Activated CD8-positive, alpha-beta memory T cell treated with anti-CD3 and anti-CD28 coated beads, Interleukin-2, amount 10 ng/mL, durations not matched to agents 7 days and 5 days (primary cell): ENCODE measurements at regions of chr11 and their contacts with region 1.

Region 1: DNA sequence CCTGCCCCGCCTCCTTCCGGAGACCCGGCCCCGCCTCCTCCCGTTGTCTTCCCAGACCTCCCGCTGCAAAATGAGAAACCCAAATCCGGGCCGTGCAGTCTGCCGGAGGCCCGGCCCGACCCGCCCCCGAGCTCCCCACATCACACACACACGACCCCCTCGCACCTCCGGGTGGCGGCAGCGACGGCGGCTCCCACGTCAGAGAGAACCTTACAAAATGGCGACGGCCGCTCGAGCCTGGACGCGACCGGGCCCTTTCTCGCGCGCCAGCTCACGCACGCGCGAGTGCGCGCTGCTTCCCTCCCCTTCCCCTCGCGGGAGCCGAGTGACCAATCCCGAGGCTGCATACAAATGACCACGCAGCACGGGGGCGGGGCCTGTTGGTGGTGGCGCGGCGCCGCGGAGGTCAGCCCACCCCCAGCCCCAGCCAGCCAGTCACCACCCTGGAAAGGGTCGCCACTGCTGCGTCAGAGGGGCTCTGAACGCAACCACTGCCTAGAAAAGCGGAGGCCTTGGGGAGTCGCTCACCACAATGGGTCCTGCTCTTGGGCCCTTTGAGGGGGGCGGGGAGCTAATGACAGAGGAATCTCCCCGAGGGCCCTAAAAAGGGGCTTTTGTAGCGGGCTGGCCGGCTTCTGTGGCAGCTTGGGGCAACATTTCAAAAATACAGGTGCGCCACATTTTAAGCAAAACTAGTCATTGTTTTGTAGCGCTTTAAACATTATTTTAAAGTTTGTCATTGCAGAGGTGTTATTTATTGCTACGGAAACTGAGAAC is at the start of gene RBM4B:
- DNase-seq: peak; percentile 97
- ATAC-seq: peak; percentile 91
- H3K4me3 Mint-ChIP-seq: peak within 1 kb of the TSS; percentile 88
- H3K27ac Mint-ChIP-seq: peak within 1 kb of the TSS; percentile 94
- H3K4me1 Mint-ChIP-seq: peaks cover 36% of the 10 kb centered on the region
- H3K27me3 Mint-ChIP-seq: no peaks in the 10 kb centered on the region
- total RNA-seq, gene RBM4B: 14.7 to 20.9 TPM

Region 2: DNA sequence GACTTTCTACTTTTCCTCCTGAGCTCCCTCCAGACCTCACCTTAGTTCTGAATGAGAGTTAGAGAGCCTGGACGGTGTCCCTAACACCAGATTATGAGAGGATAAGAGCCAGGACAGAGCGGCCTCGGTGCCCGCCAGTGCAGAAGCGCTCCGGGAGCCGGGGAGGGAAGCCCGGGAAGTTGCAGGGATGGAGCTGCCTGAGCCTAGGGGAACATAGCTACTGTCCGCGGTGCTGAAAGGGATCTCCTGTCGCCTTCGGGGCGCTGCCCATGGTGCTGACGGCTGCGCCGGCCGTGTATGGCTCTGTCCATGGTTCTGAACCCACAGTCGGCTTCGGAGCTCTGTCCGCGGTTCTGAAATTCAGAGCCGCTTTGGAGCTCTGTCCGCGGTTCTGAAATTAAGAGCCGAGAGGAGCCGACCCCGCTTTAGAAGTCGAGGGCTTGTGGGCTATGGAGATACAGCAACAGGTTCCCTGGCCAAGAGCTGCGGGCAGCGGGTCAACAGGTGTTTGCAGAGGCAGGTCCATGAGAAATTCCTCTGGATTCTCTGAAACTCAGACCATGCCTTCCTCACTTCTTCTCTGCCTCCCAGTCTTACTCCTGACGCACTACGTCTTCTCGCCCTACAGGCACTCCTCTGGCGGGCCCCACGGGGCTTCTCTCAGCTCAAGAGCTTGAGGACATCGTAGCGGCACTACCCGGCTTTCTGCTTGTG is 256.1 kb before region 1 on chr11:
- CTCF ChIA-PET with region 1: interaction called, 10 read pairs
- DNase-seq: peak; percentile 91
- ATAC-seq: peak; percentile 79
- H3K4me3 Mint-ChIP-seq: no peak overlapping the region
- H3K27ac Mint-ChIP-seq: no peak overlapping the region
- H3K4me1 Mint-ChIP-seq: peaks cover 14% of the 10 kb centered on the region
- H3K27me3 Mint-ChIP-seq: peaks cover 35% of the 10 kb centered on the region

Region 3: DNA sequence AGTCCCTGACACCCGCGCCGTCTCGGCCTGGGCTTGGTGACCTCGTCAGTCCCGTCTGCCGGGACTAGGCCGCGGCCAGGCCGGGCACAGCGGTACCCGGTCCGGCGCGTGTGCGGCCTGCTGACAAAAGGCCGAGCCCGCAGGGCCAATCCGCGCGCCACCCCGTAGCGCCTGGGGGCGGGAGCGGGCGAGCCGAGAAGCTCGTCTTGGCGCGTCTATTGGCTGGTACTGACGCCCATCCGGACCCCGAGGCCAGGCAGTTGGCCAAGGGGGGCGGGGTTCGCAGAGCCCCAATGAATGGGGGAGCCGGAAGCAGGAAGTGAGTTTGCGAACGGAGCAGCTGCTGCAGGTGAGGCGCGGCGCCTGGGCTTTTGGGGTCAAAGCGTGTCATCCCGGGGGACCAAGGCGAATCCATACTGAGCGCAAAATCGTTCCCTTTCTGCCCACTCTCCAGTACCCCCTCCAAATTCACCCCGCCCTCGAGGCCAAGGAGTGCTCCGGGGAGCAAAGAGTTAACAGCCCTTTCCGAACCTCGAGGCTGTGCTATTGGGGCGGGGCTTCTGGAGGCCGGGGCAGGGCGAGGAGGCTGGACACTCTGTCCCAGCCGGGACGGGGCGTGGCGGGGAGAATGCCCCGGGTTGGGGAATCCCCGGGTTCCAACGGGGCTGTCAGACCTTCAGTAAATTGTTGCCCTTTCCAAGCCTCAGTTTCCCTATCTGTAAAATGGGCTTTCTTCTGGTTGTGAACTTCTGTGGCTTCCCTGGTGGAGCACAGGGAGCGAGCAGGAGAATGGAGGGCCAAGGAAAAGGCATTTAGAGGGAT is 197.5 kb before region 1 on chr11 and contains the start of gene DPP3:
- CTCF ChIA-PET with region 1: interaction called, 13 read pairs
- DNase-seq: peak; percentile 98
- ATAC-seq: peak; percentile 98
- H3K4me3 Mint-ChIP-seq: peak within 1 kb of the TSS; percentile 91
- H3K27ac Mint-ChIP-seq: peak within 1 kb of the TSS; percentile 93
- H3K4me1 Mint-ChIP-seq: peaks cover 33% of the 10 kb centered on the region
- H3K27me3 Mint-ChIP-seq: no peaks in the 10 kb centered on the region
- total RNA-seq, gene DPP3: 54.2 to 79.6 TPM

Region 4: GRCh38 chr11:66568124-66568916 is 109.5 kb before region 1 on chr11 and contains the start of gene CTSF:
- CTCF ChIA-PET with region 1: interaction called, 22 read pairs
- DNase-seq: peak; percentile 71
- ATAC-seq: peak; percentile 95
- H3K4me3 Mint-ChIP-seq: peak within 1 kb of the TSS; percentile 54
- H3K27ac Mint-ChIP-seq: no peak within 1 kb of the TSS
- H3K4me1 Mint-ChIP-seq: peaks cover 5% of the 10 kb centered on the region
- H3K27me3 Mint-ChIP-seq: peaks cover 25% of the 10 kb centered on the region
- total RNA-seq, gene CTSF: 2.8 to 4.1 TPM

Region 5: GRCh38 chr11:66592457-66593302 is 85.1 kb before region 1 on chr11 and contains the starts of genes CCDC87 and CCS:
- CTCF ChIA-PET with region 1: interaction called, 60 read pairs
- DNase-seq: peak; percentile 99
- ATAC-seq: peak; percentile 98
- H3K4me3 Mint-ChIP-seq: peak within 1 kb of the TSS; percentile 94
- H3K27ac Mint-ChIP-seq: peak within 1 kb of the TSS; percentile 96
- H3K4me1 Mint-ChIP-seq: peaks cover 28% of the 10 kb centered on the region
- H3K27me3 Mint-ChIP-seq: peaks cover 6% of the 10 kb centered on the region
- total RNA-seq, gene CCDC87: 0.12 TPM in 1 of 2 experiments, not detected in the other
- total RNA-seq, gene CCS: 30.1 to 38.0 TPM

Region 6: DNA sequence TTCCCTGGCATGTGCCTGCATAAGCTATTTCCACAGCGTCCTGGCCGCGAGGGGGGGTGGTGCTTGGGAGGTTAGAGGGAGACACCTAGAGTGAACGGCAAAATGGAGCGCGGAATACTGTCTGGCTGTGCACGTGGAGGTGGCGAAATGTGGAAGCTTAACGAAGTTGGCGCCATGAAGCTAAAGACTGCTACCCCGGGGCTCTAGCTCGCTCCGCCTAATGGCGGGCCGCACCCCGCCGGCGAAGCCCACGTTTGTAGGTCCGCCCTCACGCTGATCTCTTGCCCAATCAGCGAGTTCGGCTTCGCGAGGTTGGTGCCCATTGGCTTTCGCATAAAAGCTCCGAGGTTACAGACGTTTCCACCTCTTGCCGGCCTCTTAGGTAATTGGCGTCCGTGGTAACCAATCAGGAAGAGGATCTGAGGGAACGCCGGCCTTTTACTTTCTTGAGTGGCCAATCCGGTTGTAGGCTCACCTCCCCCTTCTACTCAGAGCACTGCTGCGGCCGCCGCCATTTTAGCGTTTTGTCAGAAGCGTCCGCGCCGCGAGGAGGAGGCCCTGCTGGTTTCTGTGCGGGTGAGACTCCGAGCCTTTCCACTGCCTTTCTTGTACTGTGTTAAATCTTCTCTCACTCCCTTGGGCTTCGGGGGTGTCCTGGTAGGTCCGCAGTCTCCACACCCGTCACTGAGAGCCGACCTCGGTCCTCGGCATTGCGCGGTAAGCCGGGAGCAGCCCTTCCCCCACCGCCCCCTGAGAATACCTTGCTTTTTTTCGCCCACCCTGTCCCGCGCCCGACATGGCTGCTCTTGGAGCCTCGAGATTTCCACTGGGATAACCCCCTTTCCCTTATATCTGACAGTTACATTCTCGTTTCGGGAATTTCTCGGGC is 39.4 kb before region 1 on chr11 and contains the start of gene RBM4:
- CTCF ChIA-PET with region 1: interaction called, 19 read pairs
- DNase-seq: peak; percentile 99
- ATAC-seq: peak; percentile 97
- H3K4me3 Mint-ChIP-seq: peak within 1 kb of the TSS; percentile 87
- H3K27ac Mint-ChIP-seq: peak within 1 kb of the TSS; percentile 97
- H3K4me1 Mint-ChIP-seq: peaks cover 61% of the 10 kb centered on the region
- H3K27me3 Mint-ChIP-seq: no peaks in the 10 kb centered on the region
- total RNA-seq, gene RBM4: 111 to 119 TPM

Region 7: DNA sequence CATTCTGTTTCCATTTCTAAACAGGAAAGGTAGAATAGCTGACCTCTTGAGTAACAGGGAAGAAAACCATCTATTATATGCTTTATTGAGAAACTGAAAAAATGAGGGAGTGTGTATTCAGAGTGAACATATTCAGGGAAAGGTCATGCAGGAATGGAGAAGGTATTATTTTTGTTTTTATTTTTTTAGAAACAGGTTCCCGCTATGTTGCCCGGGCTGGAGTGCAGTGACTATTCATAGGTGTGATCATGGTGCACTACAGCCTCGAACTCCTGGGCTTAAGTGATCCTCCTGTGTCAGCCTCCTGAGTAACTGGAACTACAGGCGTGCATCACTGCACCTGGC is 156.7 kb after region 1 on chr11:
- CTCF ChIA-PET with region 1: interaction called, 13 read pairs
- DNase-seq: no peak
- ATAC-seq: no peak
- H3K4me3 Mint-ChIP-seq: no peak overlapping the region
- H3K27ac Mint-ChIP-seq: no peak overlapping the region
- H3K4me1 Mint-ChIP-seq: peaks cover 5% of the 10 kb centered on the region
- H3K27me3 Mint-ChIP-seq: no peaks in the 10 kb centered on the region